Mammary epithelial cell (primary cell): ENCODE measurements at regions of chr1 and their contacts with region 1.

Region 1: DNA sequence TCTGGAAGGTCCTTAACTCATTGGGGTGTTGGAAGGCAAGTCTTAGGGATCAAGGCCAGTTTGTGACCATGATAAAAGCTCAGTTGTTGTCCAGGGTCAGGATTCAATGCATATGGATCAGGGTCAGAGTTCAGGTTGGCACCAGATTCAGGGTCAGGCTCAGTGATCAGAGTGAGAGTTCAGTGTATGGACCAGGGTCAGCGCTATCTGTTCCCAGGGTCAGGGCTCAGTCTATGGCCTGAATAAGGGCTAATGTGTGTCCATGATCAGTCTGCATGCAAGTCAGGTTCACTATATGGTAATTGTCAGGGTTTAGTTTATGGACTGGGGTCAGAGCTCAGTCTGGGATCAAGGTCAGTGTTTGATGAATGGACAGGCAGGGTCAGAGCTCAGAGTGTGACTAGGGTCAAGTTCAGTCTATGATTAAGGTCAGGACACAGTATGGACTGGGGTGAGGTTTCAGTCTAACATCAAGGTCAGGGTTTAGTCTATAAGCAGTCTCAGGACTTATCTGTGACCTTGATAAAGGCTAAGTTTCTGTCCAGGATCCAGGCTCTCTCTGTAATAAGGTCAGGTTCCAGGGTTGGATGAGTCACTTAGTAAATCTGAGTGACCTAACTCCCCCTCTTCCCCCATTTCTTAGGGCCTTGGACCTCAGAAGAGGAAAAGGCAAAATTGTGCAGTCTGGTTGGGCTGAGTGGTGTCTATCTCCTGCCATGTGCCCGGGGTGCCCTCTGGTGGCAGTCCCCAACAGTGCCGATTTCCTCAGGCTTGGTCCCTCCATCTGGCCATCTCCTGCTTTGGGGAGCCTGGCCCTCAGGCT is 23.8 kb downstream of the KNCN start:
- DNase-seq: peak; percentile 52
- H3K4me3 ChIP-seq: no peak overlapping the region
- H3K27ac ChIP-seq: no peak overlapping the region
- H3K4me1 ChIP-seq: peaks cover 16% of the 10 kb centered on the region
- H3K27me3 ChIP-seq: no peaks in the 10 kb centered on the region
- CTCF ChIP-seq: peak; percentile 97

Region 2: GRCh38 chr1:45569962-45570581 is 957.6 kb before region 1 on chr1:
- CTCF ChIA-PET with region 1: no interaction called
- dilution Hi-C with region 1: no loop called
- in situ Hi-C with region 1: no loop called
- intact Hi-C with region 1: no loop called
- DNase-seq: peak; percentile 62
- H3K4me3 ChIP-seq: no peak overlapping the region
- H3K27ac ChIP-seq: no peak overlapping the region
- H3K4me1 ChIP-seq: no peaks in the 10 kb centered on the region
- H3K27me3 ChIP-seq: no peaks in the 10 kb centered on the region
- CTCF ChIP-seq: peak; percentile 99 to 100

Region 3: GRCh38 chr1:45833361-45833760 is 694.3 kb before region 1 on chr1:
- CTCF ChIA-PET with region 1: no interaction called
- dilution Hi-C with region 1: no loop called
- in situ Hi-C with region 1: no loop called
- intact Hi-C with region 1: no loop called
- DNase-seq: no peak
- H3K4me3 ChIP-seq: no peak overlapping the region
- H3K27ac ChIP-seq: no peak overlapping the region
- H3K4me1 ChIP-seq: no peaks in the 10 kb centered on the region
- H3K27me3 ChIP-seq: no peaks in the 10 kb centered on the region
- CTCF ChIP-seq: no peak

Region 4: DNA sequence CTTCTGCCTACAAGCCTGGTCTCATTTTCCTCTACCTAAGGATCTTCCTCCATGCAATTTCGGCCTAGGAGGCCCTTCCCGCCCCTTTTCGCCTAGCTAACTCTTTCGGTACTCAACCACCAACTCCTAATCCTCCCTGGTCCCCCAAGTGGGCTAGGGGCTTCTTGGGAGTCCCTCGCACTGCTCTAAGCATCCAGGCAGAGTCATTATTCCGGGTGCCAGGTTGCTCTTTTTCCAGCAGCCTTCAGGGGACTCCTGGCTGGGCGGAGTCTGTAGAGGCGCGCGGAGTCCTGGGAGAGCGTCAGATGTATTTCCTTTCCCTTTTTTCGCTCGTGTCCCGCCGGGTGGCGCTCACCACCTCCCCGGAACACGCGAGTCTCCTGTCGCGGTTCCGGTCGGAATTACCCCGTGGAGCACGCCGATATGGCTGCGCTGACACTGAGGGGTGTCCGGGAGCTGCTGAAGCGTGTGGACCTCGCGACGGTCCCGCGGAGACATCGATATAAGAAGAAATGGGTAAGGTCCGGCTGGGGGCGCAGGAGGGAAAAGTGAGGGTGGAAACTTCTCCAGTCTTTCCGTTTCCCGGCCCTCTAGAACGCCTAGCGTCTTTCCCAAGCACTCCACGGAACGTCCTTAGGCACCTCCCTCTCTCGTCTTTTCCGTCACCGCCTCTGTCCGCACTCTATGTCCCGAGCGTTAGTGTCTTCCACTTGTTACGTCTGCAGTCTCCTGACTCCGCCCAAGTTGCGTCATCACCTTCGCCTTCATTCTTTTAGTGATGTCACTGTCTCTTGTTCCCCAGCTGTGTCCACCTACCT is 187.1 kb before region 1 on chr1 and contains the start of gene NSUN4:
- CTCF ChIA-PET with region 1: no interaction called
- dilution Hi-C with region 1: no loop called
- in situ Hi-C with region 1: no loop called
- intact Hi-C with region 1: loop called (anchors 10 kb)
- DNase-seq: peak; percentile 91
- H3K4me3 ChIP-seq: peak within 1 kb of the TSS; percentile 58 to 79 (median 59)
- H3K27ac ChIP-seq: peak within 1 kb of the TSS; percentile 81
- H3K4me1 ChIP-seq: peaks cover 6% of the 10 kb centered on the region
- H3K27me3 ChIP-seq: no peaks in the 10 kb centered on the region
- CTCF ChIP-seq: peak; percentile 51 to 72
- total RNA-seq, gene NSUN4: 28.2 to 29.0 TPM

Region 5: GRCh38 chr1:46413596-46413985 is 114.1 kb before region 1 on chr1:
- CTCF ChIA-PET with region 1: interaction called, 7 read pairs
- dilution Hi-C with region 1: loop called (anchors 10 kb)
- in situ Hi-C with region 1: no loop called
- intact Hi-C with region 1: no loop called
- DNase-seq: no peak
- H3K4me3 ChIP-seq: no peak overlapping the region
- H3K27ac ChIP-seq: no peak overlapping the region
- H3K4me1 ChIP-seq: no peaks in the 10 kb centered on the region
- H3K27me3 ChIP-seq: no peaks in the 10 kb centered on the region
- CTCF ChIP-seq: peak; percentile 21 to 29

Region 6: GRCh38 chr1:46477153-46477929 is 50.3 kb before region 1 on chr1:
- CTCF ChIA-PET with region 1: interaction called, 5 read pairs
- dilution Hi-C with region 1: loop called (anchors 5 kb)
- in situ Hi-C with region 1: loop called (anchors 5 kb)
- intact Hi-C with region 1: loop called (anchors 1 kb)
- DNase-seq: peak; percentile 58
- H3K4me3 ChIP-seq: no peak overlapping the region
- H3K27ac ChIP-seq: no peak overlapping the region
- H3K4me1 ChIP-seq: no peaks in the 10 kb centered on the region
- H3K27me3 ChIP-seq: no peaks in the 10 kb centered on the region
- CTCF ChIP-seq: peak; percentile 86 to 90

Region 7: DNA sequence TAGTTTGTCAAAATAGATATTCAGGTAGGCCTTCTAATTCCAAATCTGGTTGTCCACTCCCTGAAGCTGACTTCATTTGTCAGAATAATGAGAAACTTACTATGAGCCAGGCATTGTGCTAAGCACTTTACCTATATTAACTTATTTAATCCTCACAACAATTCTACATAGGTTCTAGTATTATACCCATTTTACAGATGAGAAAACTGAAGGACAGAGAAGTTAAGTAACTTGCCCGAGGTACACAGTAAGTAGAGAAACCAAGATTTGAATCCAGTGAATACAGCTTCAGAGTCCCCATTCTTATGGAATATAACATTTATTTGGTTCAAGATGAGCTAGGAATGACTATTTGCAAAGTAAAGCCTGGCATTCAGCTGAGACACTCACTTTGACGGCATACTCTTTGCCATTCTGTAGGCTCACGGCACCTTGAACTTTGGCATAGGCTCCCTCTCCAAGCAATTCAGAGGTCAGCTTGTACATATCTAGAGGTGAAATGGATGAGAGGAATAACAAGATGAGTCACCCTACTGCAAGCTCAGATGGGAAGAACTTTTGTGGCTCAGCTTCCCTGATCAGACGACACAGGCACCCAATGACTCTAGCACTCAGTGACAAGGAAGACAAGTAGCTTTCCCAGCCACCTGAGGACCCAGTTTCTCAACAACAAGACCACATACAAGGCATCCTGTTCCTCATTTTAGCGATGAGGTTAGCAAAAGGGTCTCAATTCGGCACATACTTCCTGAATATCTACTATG is 52.6 kb after region 1 on chr1:
- CTCF ChIA-PET with region 1: no interaction called
- dilution Hi-C with region 1: no loop called
- in situ Hi-C with region 1: no loop called
- intact Hi-C with region 1: no loop called
- DNase-seq: no peak
- H3K4me3 ChIP-seq: no peak overlapping the region
- H3K27ac ChIP-seq: no peak overlapping the region
- H3K4me1 ChIP-seq: peaks cover 6% of the 10 kb centered on the region
- H3K27me3 ChIP-seq: no peaks in the 10 kb centered on the region
- CTCF ChIP-seq: no peak

Region 8: GRCh38 chr1:46724991-46725735 is 197.5 kb after region 1 on chr1:
- CTCF ChIA-PET with region 1: no interaction called
- dilution Hi-C with region 1: no loop called
- in situ Hi-C with region 1: no loop called
- intact Hi-C with region 1: loop called (anchors 2 kb)
- DNase-seq: peak; percentile 58
- H3K4me3 ChIP-seq: no peak overlapping the region
- H3K27ac ChIP-seq: no peak overlapping the region
- H3K4me1 ChIP-seq: peaks cover 9% of the 10 kb centered on the region
- H3K27me3 ChIP-seq: no peaks in the 10 kb centered on the region
- CTCF ChIP-seq: peak; percentile 91 to 92

Region 9: DNA sequence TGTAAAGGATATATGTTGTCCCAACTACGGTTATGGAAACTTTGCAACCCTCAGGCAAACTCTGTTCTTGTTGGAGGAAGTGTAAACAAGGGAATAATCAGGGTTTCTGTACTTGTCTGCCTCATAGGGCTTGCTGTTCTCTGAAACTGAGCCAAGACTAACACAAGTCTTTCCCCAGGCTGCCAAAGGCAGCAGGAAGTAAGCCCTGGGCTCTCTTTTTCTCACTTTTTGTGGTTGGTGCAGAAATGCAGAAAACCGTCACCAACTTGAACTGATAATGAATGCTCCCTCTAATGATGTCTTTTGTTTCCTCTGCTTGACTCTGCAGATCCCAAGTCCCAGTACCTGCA is 503.4 kb after region 1 on chr1:
- CTCF ChIA-PET with region 1: no interaction called
- dilution Hi-C with region 1: no loop called
- in situ Hi-C with region 1: no loop called
- intact Hi-C with region 1: no loop called
- DNase-seq: peak; percentile 82
- H3K4me3 ChIP-seq: no peak overlapping the region
- H3K27ac ChIP-seq: no peak overlapping the region
- H3K4me1 ChIP-seq: peaks cover 33% of the 10 kb centered on the region
- H3K27me3 ChIP-seq: no peaks in the 10 kb centered on the region
- CTCF ChIP-seq: no peak